RWPE1 (cell line): ENCODE measurements at regions of chr2 and their contacts with region 1.

Region 1: GRCh38 chr2:200864176-200864976 is at the start of gene CLK1:
- DNase-seq: peak; percentile 85
- H3K27ac ChIP-seq: peak within 1 kb of the TSS; percentile 97
- CTCF ChIP-seq: no peak

Region 2: DNA sequence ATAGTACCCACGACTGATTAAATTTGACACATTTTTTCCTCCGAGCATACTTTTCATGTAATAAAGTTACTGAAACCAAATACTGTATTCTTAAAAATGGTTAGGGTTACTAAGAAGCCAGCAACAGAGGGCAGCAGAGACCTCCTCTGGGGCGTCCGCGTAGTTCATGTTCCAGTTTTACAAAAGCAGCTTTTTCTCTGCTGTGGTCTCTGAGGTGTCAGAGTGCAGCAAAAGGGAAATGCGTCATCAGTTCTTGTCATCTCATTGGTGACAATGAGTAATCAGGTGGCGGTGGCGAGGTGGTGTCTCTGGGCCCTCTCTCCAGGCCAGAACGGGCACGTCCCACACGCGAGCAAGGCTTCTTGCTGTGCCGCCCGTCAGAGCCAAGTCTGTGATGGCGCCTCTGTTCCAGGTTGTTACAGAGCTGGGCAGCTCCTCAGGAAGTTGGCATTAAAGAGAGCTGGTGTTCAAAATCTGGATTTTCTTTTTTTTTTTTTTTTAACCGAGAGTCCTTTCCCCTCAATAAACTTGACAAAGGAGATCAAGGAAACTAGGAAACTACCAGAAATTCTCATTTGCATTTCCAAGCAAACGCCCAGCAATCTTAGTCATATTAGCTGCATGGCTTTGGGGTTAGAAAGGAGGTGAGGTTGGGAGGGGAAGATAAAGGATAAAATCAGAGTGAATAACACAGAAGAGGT is 151.2 kb before region 1 on chr2:
- CTCF ChIA-PET with region 1: interaction called, 12 read pairs
- POLR2A ChIA-PET with region 1: no interaction called
- DNase-seq: peak; percentile 69
- H3K27ac ChIP-seq: peak overlapping the region; percentile 82
- CTCF ChIP-seq: peak; percentile 90

Region 3: DNA sequence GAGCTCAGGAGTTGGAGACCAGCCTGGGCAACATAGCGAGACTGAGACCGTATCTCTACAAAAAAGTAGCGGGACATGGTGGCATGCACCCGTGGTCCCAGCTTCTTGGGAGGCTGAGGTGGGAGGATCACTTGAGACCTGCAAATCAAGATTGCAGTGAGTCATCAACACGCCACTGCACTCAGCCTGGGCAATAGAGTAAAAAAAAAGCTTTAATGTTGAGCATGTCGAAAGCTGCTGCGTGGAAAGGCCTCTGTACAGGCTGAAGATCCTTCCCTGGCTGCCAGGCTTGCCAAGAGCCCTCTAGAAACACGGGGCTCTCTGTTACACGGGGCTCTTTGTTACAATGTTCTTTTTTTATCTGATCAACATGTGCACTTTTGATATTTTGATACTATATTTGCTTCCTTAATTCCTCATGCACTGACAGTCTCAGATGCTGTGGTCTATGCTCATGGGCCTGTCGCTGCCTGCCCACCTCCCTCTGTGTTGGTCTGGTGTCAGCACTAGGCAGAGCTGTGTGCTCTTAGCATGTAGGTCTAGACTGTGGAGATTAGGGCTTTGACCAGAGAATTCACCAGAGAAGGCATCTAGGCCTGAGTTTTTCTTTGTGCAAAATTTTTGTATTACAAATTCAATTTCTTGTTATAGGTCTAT is 18.6 kb before region 1 on chr2:
- CTCF ChIA-PET with region 1: no interaction called
- POLR2A ChIA-PET with region 1: no interaction called
- DNase-seq: no peak
- H3K27ac ChIP-seq: peak overlapping the region; percentile 10; the same call in 1 of the 2 replicates
- CTCF ChIP-seq: no peak